Activated CD4-positive, alpha-beta memory T cell treated with anti-CD3 and anti-CD28 coated beads for 36 hours (primary cell): ENCODE measurements at regions of chr6 and their contacts with region 1.

Region 1: DNA sequence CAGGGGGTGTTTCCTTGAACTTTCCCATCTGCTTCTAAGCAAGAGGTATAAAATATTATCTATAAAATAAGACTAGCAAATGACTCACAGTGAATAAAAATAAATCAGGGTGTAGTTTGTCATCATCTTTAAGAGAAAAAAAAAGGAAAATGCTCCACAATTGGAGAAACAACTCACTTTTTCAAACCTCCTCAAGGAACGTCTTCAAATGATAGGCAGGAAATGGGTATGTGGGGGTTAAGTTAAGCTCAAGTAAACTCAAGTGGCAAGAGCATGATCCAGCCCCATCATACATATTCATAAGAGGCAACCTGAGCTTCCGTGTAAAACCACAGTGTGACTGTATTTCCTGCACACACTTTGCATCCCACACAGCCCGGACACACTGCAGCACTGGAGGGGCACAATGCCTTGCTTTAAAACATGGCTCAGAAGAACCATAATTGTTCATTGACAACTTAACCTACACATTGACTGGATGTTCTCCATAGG is 58.5 kb upstream of the CEP85L start:
- DNase-seq: peak; percentile 88
- H3K4me3 Mint-ChIP-seq: peak overlapping the region; percentile 95
- H3K27ac Mint-ChIP-seq: peak overlapping the region; percentile 98
- H3K4me1 Mint-ChIP-seq: peaks cover 72% of the 10 kb centered on the region
- H3K27me3 Mint-ChIP-seq: no peaks in the 10 kb centered on the region

Region 2: GRCh38 chr6:118651282-118652050 is 58.4 kb before region 1 on chr6 and contains the start of gene CEP85L:
- CTCF ChIA-PET with region 1: interaction called, 3 read pairs
- POLR2A ChIA-PET with region 1: interaction called, 20 read pairs
- intact Hi-C with region 1: loop called (anchors 1 kb)
- DNase-seq: peak; percentile 93
- H3K4me3 Mint-ChIP-seq: peak within 1 kb of the TSS; percentile 87
- H3K27ac Mint-ChIP-seq: peak within 1 kb of the TSS; percentile 93
- H3K4me1 Mint-ChIP-seq: peaks cover 53% of the 10 kb centered on the region
- H3K27me3 Mint-ChIP-seq: no peaks in the 10 kb centered on the region
- total RNA-seq, gene CEP85L: 21.1 to 23.3 TPM

Region 3: DNA sequence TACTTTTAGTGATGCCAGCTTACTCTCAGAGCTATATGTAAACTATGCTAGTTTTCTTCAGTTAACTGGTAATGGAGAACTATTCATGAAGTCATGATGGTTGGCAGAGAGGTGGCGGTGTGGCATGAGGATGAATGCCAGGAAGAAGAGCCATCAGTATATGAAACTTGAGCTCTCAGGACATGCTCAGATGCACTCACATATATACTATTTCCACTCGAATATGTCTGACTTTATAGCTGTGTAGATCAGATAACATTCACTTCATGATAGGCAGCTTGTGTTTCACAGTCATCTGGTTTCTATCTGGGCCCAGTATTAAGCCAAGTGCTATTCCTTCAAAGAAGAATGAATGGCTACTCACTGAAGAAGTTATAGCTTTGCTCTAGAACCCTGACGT is 12.4 kb before region 1 on chr6:
- CTCF ChIA-PET with region 1: interaction called, 13 read pairs
- POLR2A ChIA-PET with region 1: interaction called, 5 read pairs
- intact Hi-C with region 1: loop called (anchors 1 kb)
- DNase-seq: no peak
- H3K4me3 Mint-ChIP-seq: no peak overlapping the region
- H3K27ac Mint-ChIP-seq: no peak overlapping the region
- H3K4me1 Mint-ChIP-seq: peaks cover 64% of the 10 kb centered on the region
- H3K27me3 Mint-ChIP-seq: no peaks in the 10 kb centered on the region

Region 4: DNA sequence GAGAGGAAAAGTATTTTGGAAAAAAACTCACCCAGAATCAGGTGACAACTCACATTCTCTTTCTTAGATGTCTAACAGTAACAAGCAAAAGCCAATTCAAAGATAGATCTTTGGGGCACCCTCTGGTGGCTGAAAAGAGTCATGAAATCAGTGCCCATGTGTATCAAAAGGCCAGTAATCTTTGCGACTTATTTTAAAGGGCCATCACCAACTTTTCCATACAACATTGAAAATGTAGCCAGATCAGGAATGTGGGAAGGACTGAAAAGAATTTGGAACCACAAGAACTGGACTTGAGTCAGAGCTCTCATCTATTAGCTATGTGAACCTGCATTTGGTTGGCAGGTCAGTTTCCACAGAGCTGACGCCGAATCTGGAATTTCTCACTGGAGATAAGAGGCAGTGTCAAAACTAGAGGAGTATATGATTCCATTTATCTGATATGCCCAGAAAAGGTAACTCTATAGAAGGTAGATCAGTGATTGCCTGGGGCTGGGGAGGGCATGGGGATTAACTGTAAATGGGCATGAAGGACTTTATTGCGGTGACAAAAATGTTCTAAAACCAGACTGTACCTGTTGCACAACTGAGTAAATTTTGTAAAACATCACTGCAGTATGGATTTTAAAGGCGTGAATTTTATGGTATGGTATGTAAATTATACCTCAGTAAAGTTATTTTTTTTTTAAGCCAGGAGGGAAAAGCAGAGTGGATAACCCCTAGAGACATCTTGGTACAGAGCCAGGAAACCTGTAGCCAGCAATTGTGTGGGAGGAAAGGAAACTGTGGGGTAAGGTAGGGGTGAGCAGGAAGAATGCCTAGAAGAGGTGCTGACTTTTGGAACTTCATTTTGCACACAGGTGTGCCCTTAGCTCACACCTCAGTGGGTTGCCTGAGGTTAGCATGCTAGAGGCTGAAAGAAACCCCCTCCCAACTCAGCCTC is 67.0 kb after region 1 on chr6:
- CTCF ChIA-PET with region 1: interaction called, 8 read pairs
- POLR2A ChIA-PET with region 1: interaction called, 4 read pairs
- intact Hi-C with region 1: loop called (anchors 1 kb)
- DNase-seq: peak; percentile 79
- H3K4me3 Mint-ChIP-seq: no peak overlapping the region
- H3K27ac Mint-ChIP-seq: no peak overlapping the region
- H3K4me1 Mint-ChIP-seq: peaks cover 20% of the 10 kb centered on the region
- H3K27me3 Mint-ChIP-seq: no peaks in the 10 kb centered on the region

Region 5: DNA sequence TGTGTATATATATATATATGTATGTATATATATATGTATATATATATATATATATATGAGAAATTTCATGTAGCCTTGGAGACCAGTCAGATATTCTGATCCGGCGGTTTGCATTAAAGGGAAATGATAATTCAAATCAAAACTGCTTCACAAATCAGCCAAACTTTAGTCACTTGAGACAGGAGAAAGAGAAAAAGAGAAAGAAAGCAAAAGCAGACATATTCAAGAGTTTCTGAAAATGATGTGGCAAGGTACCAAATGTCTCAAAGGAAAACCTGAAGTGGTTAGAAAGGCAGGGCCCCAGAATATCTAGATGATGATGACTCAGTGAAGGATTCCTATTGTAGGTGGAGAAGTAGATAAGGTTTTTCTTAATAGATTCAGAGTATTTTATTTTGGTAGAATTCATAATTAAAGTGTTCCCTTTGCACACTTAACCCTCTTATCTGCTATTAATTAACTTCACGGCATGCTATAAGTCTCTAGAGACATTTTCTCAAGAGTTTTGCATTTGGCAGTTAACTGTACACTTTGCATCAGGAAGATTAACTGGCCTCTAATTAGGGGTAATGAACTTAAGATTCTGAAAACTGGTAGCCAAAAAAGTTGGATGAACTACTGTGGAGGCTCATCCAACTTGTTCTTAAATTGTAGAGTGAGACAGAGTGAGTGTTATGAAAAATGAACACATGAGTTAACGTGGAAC is 133.9 kb after region 1 on chr6:
- CTCF ChIA-PET with region 1: no interaction called
- POLR2A ChIA-PET with region 1: interaction called, 6 read pairs
- intact Hi-C with region 1: loop called (anchors 1 kb)
- DNase-seq: no peak
- H3K4me3 Mint-ChIP-seq: peak overlapping the region; percentile 33
- H3K27ac Mint-ChIP-seq: peak overlapping the region; percentile 34
- H3K4me1 Mint-ChIP-seq: peaks cover 32% of the 10 kb centered on the region
- H3K27me3 Mint-ChIP-seq: no peaks in the 10 kb centered on the region